ENCODE measurements at regions of chr7 and their contacts with region 1.

Region 1: DNA sequence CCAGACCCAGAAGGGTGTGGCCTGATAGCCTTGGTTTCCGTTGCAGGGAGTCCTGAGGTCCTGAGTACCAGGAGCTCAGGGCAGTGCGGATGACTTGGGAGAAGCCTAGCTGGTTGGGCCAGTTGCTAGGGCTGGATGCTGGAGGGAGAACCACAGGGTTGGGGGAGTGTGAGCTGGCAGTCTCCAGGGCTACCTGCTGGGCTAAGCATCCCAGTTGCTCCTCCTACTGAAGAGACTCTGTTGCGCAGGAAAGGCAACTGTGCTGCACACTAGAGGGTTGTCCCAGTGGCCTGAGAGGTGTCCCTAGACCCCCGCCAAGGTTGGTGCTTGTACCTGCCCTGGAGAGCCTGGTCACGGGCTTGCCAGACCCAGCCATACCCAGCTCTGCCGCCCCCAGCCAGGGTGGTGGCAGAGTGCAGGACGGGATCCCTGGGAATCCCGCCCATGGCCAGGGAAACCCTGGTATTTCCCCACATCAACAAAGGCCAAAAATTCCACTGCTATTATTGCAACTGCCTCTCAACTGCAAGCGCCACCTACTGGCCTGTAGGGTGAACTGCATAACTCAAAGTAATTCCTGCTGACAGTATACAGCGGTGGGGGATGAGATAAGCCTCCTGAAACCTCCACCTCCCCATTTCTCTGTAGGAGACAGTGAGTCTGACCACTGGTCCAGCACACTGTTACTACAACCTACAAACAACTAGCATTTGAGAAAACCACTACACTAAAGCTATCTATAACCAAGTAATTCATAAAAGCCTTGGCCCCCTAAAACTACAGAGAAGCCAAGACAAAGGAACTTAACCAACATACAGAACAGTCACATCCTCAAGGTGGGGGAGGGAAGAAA is 67.6 kb upstream of the DDC start:
- DNase-seq: peak; percentile 64
- H3K4me3 Mint-ChIP-seq: no peak overlapping the region
- H3K27ac Mint-ChIP-seq: no peak overlapping the region
- H3K4me1 Mint-ChIP-seq: peaks cover 11% of the 10 kb centered on the region
- H3K27me3 Mint-ChIP-seq: peaks cover 20% of the 10 kb centered on the region

Region 2: DNA sequence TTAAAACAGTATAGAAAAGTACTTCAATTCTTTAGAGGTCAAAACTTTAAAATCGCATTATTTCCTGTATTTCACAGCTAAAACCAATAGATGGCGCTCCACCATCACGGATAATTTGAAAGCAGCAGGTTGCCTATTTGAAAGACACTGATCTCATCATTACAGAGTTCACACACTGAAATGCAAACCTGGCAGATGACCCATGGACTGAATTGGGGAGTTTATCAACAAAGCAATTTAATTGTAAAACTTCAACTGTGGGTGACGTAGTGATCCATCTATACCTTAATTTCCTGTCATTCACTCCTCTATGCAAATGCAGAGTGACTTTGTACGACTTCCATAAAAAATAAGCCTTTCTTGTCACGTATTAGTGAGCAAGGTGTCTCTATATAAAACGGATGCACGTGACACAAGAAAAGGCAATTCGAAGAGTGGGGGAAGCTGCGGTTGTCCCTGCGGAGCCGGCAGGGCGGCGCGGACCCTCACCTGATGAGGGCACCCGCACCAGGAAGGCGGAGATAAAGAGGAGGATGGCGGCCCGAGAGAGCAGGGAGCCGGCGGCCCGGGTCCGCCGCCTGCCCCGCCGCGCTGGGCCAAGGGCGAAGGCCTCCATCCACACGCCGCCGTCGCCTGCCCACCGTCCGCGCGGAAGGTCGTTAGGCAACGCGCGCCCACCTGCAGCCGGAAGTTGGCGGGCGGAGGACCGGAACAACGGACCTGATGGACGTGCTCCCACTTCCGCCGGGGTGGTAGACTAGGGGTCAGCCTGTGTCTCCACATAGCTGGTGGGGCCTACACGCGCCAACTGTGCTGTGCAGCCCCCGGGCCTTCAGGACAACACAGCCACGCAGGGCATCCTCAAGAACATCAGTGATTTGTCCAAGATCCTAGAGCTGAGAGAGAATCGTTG is 540.0 kb before region 1 on chr7 and contains the start of gene ZPBP:
- CTCF ChIA-PET with region 1: interaction called, 12 read pairs
- POLR2A ChIA-PET with region 1: no interaction called
- DNase-seq: peak; percentile 43
- H3K4me3 Mint-ChIP-seq: peak within 1 kb of the TSS; percentile 73
- H3K27ac Mint-ChIP-seq: peak within 1 kb of the TSS; percentile 47
- H3K4me1 Mint-ChIP-seq: peaks cover 4% of the 10 kb centered on the region
- H3K27me3 Mint-ChIP-seq: peaks cover 19% of the 10 kb centered on the region
- total RNA-seq, gene ZPBP: not detected

Region 3: GRCh38 chr7:50595491-50596102 is 37.2 kb before region 1 on chr7:
- CTCF ChIA-PET with region 1: interaction called, 37 read pairs
- POLR2A ChIA-PET with region 1: no interaction called
- DNase-seq: peak; percentile 39
- H3K4me3 Mint-ChIP-seq: no peak overlapping the region
- H3K27ac Mint-ChIP-seq: peak overlapping the region; percentile 85
- H3K4me1 Mint-ChIP-seq: peaks cover 45% of the 10 kb centered on the region
- H3K27me3 Mint-ChIP-seq: peaks cover 4% of the 10 kb centered on the region

Region 4: DNA sequence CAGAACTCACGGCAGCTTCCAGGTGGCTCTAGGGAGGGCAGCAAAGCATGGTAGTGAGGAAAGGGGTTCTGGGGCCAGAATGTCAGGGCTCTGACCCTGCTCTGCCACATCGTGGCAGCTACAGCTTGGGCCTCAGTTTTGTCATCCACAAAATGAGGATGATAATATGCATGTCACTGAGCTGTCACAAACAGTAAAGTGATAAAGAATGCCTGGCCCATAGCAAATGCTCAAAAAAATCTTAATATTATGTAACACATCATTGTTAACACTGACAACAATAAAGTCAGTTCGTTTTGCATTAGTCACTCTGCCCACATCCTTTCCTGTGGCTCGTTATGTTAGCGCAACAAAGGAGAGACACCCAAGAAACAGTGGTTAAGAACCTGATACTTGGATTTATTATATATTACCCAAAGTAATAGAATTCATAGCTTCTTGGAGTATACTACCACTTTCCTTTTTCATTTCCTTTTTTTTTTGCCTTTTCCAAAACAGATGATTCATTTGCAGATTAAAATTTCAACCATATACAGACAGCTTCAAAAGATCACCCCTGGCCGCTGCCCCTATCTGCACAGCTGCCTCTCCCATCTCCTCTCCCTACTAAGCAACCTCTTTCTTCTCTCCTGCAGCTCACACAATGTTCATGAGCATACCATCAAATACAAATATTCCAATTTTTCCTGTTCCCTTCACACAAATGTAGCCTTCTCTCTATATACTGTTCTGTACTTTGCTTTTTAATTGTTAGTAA is 22.1 kb before region 1 on chr7:
- CTCF ChIA-PET with region 1: interaction called, 12 read pairs
- POLR2A ChIA-PET with region 1: interaction called, 4 read pairs
- DNase-seq: peak; percentile 78
- H3K4me3 Mint-ChIP-seq: no peak overlapping the region
- H3K27ac Mint-ChIP-seq: peak overlapping the region; percentile 24
- H3K4me1 Mint-ChIP-seq: peaks cover 48% of the 10 kb centered on the region
- H3K27me3 Mint-ChIP-seq: peaks cover 2% of the 10 kb centered on the region

Region 5: DNA sequence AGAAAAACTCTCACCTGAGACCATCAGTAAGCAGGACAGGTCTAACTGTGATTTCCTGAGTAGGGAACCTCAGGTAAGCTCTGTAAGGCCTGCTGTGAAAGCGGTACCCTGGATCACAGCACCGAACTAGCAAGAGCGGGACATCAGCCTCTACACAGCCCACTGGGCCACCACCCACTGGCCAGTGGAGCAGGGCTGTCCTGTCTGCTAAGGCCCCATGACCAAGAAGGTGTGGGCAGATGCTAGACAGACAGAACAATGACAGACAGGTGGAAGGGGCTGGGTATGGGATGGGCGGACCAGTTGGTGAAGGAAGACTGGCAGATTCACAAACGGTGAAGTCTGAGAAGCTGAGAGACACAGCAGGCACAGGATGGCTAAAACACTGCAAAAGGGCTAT is 11.8 kb after region 1 on chr7:
- CTCF ChIA-PET with region 1: interaction called, 16 read pairs
- POLR2A ChIA-PET with region 1: no interaction called
- DNase-seq: no peak
- H3K4me3 Mint-ChIP-seq: no peak overlapping the region
- H3K27ac Mint-ChIP-seq: no peak overlapping the region
- H3K4me1 Mint-ChIP-seq: peaks cover 10% of the 10 kb centered on the region
- H3K27me3 Mint-ChIP-seq: no peaks in the 10 kb centered on the region

Measured in activated CD4-positive, alpha-beta memory T cell treated with anti-CD3 and anti-CD28 coated beads, Interleukin-2, amount 10 ng/mL, durations not matched to agents 7 days and 5 days (primary cell).